Right ventricle myocardium inferior (tissue), 1 donor: ENCODE measurements at regions of chr7 and their contacts with region 1.

Region 1: GRCh38 chr7:101978683-101979082 is 161.3 kb downstream of the CUX1 start:
- DNase-seq: peak; percentile 37
- ATAC-seq: no peak

Region 2: GRCh38 chr7:101321491-101322401 is 656.9 kb before region 1 on chr7 and contains the start of gene IFT22:
- intact Hi-C with region 1: no loop called
- DNase-seq: peak; percentile 95
- ATAC-seq: peak; percentile 99
- total RNA-seq, gene IFT22: 26.5 TPM

Region 3: GRCh38 chr7:101964680-101965452 is 13.8 kb before region 1 on chr7:
- intact Hi-C with region 1: loop called (anchors 1 kb)
- DNase-seq: peak; percentile 32
- ATAC-seq: peak; percentile 20